Activated CD4-positive, alpha-beta T cell treated with anti-CD3 and anti-CD28 coated beads for 36 hours (primary cell): ENCODE measurements at regions of chr10 and their contacts with region 1.

Region 1: DNA sequence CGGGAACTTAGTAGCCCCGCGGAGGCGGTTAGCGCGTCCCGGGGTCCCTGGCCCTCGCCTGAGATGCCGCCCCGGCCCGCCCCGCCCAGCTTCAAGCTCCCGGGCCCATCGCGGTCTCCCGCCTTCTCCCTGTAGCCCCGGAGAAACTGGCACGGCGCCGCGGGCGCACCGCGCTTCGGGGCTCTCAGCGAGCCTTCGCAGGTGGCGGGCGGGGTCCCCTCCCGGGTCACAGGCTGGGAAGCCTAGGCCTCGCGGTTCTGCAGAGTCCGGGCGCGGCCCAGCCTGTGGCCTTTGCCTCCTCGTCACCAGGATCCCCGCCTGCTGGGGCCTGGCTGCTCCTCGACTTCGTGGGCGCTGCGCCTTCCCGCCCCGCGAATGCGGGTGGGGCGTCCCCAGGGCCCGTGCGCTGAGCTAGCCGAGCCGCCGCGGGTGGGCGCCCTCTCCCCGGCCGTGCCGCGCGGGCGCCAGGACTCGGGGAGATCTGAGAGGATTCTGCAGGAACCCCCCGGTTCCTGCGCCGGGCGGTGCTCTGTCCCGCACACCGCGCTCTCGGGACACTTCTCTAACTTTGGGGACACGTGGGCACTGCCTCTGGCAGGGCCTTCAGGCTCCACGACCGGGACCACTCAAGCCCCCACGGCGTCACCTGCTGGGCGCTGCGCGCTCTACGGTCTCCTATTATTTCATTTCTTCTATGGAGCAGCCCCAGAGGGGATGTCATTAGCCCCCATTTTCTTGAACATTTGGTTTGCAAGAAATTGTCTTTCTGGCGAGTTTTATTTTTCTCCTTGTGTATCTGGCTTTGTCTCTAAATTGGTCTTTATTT is 682 bp upstream of the RGS10 start:
- DNase-seq: peak; percentile 80
- ATAC-seq: peak; percentile 34
- H3K4me3 Mint-ChIP-seq: peak overlapping the region; percentile 77
- H3K27ac Mint-ChIP-seq: peak overlapping the region; percentile 89
- H3K4me1 Mint-ChIP-seq: peaks cover 31% of the 10 kb centered on the region
- H3K27me3 Mint-ChIP-seq: no peaks in the 10 kb centered on the region

Region 2: GRCh38 chr10:119131512-119132240 is 411.5 kb before region 1 on chr10:
- CTCF ChIA-PET with region 1: no interaction called
- POLR2A ChIA-PET with region 1: interaction called, 5 read pairs
- intact Hi-C with region 1: loop called in 1 of 2 experiments (anchors 2 kb)
- DNase-seq: peak; percentile 75
- ATAC-seq: peak; percentile 84
- H3K4me3 Mint-ChIP-seq: peak overlapping the region; percentile 78
- H3K27ac Mint-ChIP-seq: peak overlapping the region; percentile 99
- H3K4me1 Mint-ChIP-seq: peaks cover 50% of the 10 kb centered on the region
- H3K27me3 Mint-ChIP-seq: no peaks in the 10 kb centered on the region

Region 3: GRCh38 chr10:119199231-119199992 is 343.8 kb before region 1 on chr10:
- CTCF ChIA-PET with region 1: no interaction called
- POLR2A ChIA-PET with region 1: no interaction called
- intact Hi-C with region 1: loop called in 1 of 2 experiments (anchors 2 kb)
- DNase-seq: peak; percentile 66
- ATAC-seq: peak; percentile 85
- H3K4me3 Mint-ChIP-seq: no peak overlapping the region
- H3K27ac Mint-ChIP-seq: no peak overlapping the region
- H3K4me1 Mint-ChIP-seq: peaks cover 13% of the 10 kb centered on the region
- H3K27me3 Mint-ChIP-seq: no peaks in the 10 kb centered on the region

Region 4: DNA sequence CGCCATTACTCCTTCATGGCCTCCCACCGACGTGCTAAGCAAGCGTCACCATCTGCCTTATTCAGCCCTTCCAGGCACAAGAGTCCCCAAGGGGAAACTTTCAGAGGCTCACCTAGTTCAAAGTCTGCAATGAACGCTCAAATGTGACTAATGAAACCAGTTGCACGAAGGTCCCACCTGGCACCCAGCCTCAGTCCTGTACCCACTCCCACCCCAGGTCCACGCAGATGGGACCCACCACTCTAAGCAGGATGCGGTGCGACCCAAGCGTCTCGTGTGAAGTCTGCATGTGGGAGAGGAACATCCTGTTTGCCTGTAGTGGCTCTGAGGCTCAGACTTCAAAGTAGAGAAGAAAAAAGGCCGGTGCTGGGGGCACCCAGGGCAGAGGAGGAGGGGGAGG is 41.0 kb before region 1 on chr10:
- CTCF ChIA-PET with region 1: interaction called, 4 read pairs
- POLR2A ChIA-PET with region 1: interaction called, 5 read pairs
- intact Hi-C with region 1: loop called (anchors 1 kb)
- DNase-seq: peak; percentile 87
- ATAC-seq: peak; percentile 78
- H3K4me3 Mint-ChIP-seq: peak overlapping the region; percentile 56
- H3K27ac Mint-ChIP-seq: peak overlapping the region; percentile 98
- H3K4me1 Mint-ChIP-seq: peaks cover 96% of the 10 kb centered on the region
- H3K27me3 Mint-ChIP-seq: no peaks in the 10 kb centered on the region

Region 5: DNA sequence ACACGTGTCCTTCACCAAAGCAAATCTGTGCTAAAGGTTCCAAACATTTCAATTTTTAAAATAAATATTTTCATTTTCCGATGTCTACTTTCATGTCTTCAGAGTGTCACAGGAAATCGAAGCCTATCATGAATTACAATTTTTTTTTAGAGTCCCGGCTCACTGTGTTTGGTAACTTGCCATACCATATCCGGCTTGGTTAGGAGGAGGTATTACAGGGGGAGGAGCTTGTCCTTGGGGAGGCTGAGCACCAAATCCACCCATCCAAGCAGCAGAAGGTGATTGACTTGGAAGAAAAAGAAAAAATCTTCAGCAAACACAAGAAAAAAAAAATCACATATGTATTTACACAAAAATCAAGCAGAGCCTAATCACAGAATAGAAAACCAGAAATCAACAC is 32.3 kb after region 1 on chr10:
- CTCF ChIA-PET with region 1: interaction called, 3 read pairs
- POLR2A ChIA-PET with region 1: no interaction called
- intact Hi-C with region 1: loop called in 1 of 2 experiments (anchors 2 kb)
- DNase-seq: peak; percentile 37
- ATAC-seq: peak; percentile 91
- H3K4me3 Mint-ChIP-seq: no peak overlapping the region
- H3K27ac Mint-ChIP-seq: peak overlapping the region; percentile 24
- H3K4me1 Mint-ChIP-seq: peaks cover 29% of the 10 kb centered on the region
- H3K27me3 Mint-ChIP-seq: no peaks in the 10 kb centered on the region

Region 6: DNA sequence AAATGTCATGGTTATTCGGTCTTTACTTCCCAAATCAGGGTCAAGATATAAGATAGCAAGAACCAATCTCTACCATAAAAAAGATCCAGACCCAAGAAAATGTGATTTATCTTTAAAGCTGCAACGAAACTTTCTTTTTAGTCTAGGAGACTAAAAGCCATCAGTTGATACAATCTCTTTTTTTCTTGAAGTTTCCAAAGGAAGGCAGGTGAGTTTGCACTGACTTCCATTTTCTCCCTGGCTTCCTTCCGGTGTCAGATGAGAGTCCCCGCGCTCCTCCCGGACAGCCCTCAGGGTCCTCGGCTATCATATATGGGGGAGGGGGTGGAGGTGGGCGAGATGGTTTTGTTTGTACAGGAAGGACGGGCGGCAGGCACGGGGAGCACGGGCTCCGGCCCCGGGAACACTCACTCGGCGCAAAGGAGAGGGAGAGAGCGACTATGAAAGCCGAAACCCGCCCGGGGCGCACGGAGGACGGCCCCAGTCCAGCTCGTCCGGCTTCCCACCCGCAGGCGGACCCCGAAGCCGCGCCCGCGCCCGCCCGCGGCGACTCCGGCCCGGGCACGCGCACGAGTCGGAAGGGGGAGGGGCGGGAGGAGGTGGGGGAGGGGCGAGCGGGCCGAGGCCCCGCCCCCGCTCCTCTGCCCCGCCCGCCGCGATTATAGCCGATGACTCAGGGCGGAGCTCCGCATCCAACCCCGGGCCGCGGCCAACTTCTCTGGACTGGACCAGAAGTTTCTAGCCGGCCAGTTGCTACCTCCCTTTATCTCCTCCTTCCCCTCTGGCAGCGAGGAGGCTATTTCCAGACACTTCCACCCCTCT is 107.7 kb after region 1 on chr10 and contains the start of gene BAG3:
- CTCF ChIA-PET with region 1: interaction called, 3 read pairs
- POLR2A ChIA-PET with region 1: interaction called, 3 read pairs
- intact Hi-C with region 1: loop called (anchors 1 to 2 kb)
- DNase-seq: peak; percentile 91
- ATAC-seq: peak; percentile 48
- H3K4me3 Mint-ChIP-seq: peak within 1 kb of the TSS; percentile 84
- H3K27ac Mint-ChIP-seq: peak within 1 kb of the TSS; percentile 95
- H3K4me1 Mint-ChIP-seq: peaks cover 39% of the 10 kb centered on the region
- H3K27me3 Mint-ChIP-seq: no peaks in the 10 kb centered on the region
- total RNA-seq, gene BAG3: 23.8 to 30.7 TPM

Region 7: DNA sequence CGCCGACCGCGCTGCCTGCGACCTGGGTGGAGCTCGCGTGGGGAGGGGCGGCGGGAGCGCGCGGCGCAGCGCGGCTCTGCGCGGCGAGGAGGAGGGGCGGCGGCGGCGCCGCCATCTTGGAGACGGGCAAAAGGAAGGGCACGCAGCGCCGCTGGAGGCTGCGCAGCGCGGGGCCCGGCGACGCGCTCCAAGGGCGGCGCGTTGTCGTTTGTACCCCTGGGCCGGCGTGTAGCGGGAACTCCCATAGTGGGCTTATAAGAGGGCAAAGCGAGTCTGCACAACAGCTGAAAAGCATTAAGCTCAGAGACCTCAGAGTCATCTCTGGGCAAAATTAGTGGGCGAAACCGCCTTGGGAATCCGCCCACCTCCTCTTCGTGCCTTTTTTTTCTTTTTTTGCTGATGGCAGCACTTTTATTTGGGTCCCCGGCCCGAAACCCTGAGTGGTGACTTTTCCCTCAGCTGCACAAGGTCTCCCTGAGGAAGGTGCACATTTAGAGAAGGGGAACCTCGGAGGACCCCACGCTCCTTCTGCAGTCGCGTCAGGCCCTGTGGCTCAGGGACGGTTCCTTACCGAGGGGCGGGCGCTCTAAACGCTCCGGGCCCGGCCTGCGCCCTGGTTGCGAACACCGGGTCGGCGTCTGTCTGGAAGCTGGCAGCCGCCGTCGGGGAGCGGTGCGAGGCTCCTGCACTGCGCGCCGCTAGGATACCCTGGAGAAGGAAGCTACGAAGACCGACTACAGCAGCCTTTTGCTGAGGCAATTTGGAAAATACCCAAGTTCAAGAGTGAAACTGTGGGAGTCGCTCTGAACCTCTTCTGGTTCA is 329.9 kb after region 1 on chr10:
- CTCF ChIA-PET with region 1: no interaction called
- POLR2A ChIA-PET with region 1: interaction called, 4 read pairs
- intact Hi-C with region 1: loop called in 1 of 2 experiments (anchors 2 kb)
- DNase-seq: peak; percentile 94
- ATAC-seq: peak; percentile 95
- H3K4me3 Mint-ChIP-seq: peak overlapping the region; percentile 79
- H3K27ac Mint-ChIP-seq: peak overlapping the region; percentile 87
- H3K4me1 Mint-ChIP-seq: peaks cover 33% of the 10 kb centered on the region
- H3K27me3 Mint-ChIP-seq: no peaks in the 10 kb centered on the region

Region 8: GRCh38 chr10:120145107-120145506 is 601.9 kb after region 1 on chr10:
- CTCF ChIA-PET with region 1: no interaction called
- POLR2A ChIA-PET with region 1: no interaction called
- intact Hi-C with region 1: no loop called
- DNase-seq: no peak
- ATAC-seq: no peak
- H3K4me3 Mint-ChIP-seq: no peak overlapping the region
- H3K27ac Mint-ChIP-seq: no peak overlapping the region
- H3K4me1 Mint-ChIP-seq: no peaks in the 10 kb centered on the region
- H3K27me3 Mint-ChIP-seq: no peaks in the 10 kb centered on the region